Colonic mucosa (tissue), 4 donors: ENCODE measurements at regions of chr7 and their contacts with region 1.

Region 1: GRCh38 chr7:97027427-97028234 is 3.0 kb upstream of the DLX5 start:
- DNase-seq: peak; percentile 71
- H3K4me3 ChIP-seq: no peak overlapping the region
- H3K27ac ChIP-seq: no peak overlapping the region
- H3K4me1 ChIP-seq: no peaks in the 10 kb centered on the region
- H3K27me3 ChIP-seq: peaks cover 44% of the 10 kb centered on the region
- CTCF ChIP-seq: peak; percentile 71

Region 2: DNA sequence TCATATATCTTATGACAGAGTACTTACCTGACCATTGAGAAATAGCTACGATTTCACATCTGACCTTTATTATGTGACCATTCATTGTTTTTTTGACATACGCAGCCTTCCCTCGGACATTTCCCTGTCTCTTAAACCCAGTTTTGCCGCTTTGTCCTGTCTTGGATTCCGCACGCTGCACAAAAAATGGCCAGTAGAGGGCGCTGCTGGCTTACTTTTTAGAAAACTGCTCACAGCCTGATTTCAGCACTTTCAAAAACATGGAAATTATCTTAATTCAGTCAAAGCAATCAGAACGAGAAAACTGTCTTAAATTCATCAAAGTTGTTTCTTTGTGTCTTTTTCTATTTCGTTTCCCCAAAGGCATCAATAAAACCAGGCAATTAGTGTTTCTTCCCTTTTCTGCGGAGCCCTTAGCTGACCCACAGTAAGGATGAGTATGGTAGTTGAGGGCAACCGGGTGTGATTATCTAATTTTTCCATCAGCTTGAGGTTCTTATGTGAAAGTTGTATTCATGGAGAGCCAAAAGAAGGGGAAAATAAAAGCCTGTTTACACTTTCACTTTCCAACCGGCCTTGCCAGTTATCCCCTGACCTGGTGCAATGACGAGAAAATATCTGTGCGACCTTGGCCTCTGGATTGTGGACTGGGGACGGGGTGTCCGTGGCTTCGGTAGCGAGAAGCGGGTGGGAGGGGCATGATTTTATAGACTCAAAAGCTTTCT is 1110.9 kb before region 1 on chr7:
- intact Hi-C with region 1: loop called (anchors 5 kb)
- DNase-seq: peak; percentile 80
- H3K4me3 ChIP-seq: no peak overlapping the region
- H3K27ac ChIP-seq: no peak overlapping the region
- H3K4me1 ChIP-seq: no peaks in the 10 kb centered on the region
- H3K27me3 ChIP-seq: no peaks in the 10 kb centered on the region
- CTCF ChIP-seq: peak; percentile 86

Region 3: GRCh38 chr7:96074871-96075270 is 952.8 kb before region 1 on chr7:
- intact Hi-C with region 1: loop called (anchors 5 kb)
- DNase-seq: no peak
- H3K4me3 ChIP-seq: no peak overlapping the region
- H3K27ac ChIP-seq: no peak overlapping the region
- H3K4me1 ChIP-seq: no peaks in the 10 kb centered on the region
- H3K27me3 ChIP-seq: peaks cover 9% of the 10 kb centered on the region
- CTCF ChIP-seq: no peak

Region 4: GRCh38 chr7:96778263-96778662 is 249.4 kb before region 1 on chr7:
- intact Hi-C with region 1: no loop called
- DNase-seq: no peak
- H3K4me3 ChIP-seq: no peak overlapping the region
- H3K27ac ChIP-seq: no peak overlapping the region
- H3K4me1 ChIP-seq: no peaks in the 10 kb centered on the region
- H3K27me3 ChIP-seq: no peaks in the 10 kb centered on the region
- CTCF ChIP-seq: no peak

Region 5: DNA sequence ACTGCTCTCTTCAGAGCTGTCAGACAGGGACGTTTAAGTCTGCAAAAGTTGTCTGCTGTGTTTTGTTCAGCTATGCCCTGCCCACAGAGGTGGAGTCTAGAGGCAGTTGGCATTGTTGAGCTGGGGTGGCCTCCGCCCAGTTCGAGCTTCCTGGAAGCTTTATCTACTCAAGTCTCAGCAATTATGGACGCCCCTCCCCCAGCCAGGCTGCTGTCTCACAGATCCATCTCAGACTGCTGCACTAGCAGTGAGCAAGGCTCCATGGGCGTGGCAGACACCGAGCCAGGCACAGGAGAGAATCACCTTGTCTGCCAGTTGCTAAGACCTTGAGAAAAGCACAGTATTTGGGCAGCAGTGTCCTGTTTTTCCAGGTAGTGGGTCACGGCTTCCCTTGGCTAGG is 187.9 kb after region 1 on chr7:
- intact Hi-C with region 1: no loop called
- DNase-seq: peak; percentile 76
- H3K4me3 ChIP-seq: no peak overlapping the region
- H3K27ac ChIP-seq: no peak overlapping the region
- H3K4me1 ChIP-seq: no peaks in the 10 kb centered on the region
- H3K27me3 ChIP-seq: no peaks in the 10 kb centered on the region
- CTCF ChIP-seq: no peak